T-cell (primary cell): ENCODE measurements at regions of chr3 and their contacts with region 1.

Region 1: DNA sequence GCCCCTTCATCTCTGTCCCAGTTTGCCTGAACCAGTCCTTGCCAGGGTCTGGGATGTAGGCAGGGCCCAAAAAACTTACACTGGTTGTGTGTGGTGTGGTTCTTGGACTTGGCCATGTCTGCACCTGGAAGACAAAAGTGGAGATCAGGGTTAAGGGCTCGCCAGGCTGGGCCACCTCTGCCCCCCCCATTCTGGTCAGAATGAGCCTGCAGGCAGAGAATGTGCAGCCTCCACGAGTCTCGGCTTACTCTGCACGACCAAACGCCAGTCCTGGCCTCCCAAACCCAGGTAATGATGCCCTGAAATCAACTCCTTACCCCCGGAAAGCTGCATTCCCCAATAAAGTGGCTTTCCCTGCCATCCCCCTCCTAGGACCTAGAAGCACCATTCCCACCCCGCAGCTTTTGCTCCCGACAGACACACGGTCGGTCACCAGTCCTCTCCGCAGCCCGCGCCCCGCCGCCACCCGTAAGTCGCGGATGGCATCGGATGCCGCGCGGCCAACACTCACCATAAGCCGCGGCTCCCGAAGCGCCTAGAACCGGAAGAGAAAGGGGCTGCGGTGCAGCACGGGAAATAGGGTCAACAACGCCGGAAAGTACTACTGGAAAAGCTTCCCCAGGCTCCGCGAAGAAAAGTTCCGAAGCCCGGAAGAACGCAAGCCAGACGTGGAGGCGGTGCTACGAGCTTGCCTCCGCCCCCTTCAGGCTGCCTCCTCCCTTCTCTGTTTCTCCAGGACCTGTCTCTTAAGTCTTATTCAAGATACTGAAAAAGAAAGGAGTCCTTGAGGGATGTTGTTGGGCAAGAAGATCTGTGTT is at the start of gene RPL29:
- DNase-seq: peak; percentile 78 to 96 (median 90)
- ATAC-seq: peak; percentile 94 to 98 (median 96)
- H3K4me3 ChIP-seq: peak within 1 kb of the TSS; percentile 68 to 98
- H3K4me3 Mint-ChIP-seq: peak within 1 kb of the TSS; percentile 99 to 100 (median 100)
- H3K27ac ChIP-seq: peak within 1 kb of the TSS; percentile 84
- H3K27ac Mint-ChIP-seq: peak within 1 kb of the TSS; percentile 100
- H3K4me1 ChIP-seq: peaks cover 15 to 35% of the 10 kb centered on the region in 2 experiments
- H3K4me1 Mint-ChIP-seq: peaks cover 31 to 41% (median 37%) of the 10 kb centered on the region in 3 donors
- H3K27me3 ChIP-seq: peaks cover 0 to 4% of the 10 kb centered on the region in 2 experiments
- H3K27me3 Mint-ChIP-seq: no peaks in the 10 kb centered on the region
- total RNA-seq, gene RPL29: 1,518 to 1,711 (median 1,629) TPM

Region 2: DNA sequence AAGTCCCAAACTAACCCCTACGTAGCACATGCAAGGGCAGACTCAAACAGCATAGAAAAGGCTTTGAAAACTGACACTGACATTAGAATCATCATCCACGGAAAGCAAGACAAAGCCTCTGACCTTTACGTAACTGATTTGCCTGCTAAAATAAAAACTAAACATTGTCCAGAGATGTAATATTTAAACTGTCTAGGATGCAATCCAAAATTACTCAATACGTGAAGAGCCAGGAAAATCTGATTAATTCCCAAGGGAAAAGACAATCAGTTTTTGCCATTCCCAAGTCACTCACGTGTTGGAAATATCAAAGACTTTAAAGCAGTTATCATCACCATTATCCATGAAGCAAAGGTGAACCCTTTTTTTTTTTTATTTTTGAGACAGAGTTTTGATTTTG is 79.1 kb before region 1 on chr3:
- CTCF ChIA-PET with region 1: no interaction called
- POLR2A ChIA-PET with region 1: no interaction called
- DNase-seq: no peak
- ATAC-seq: no peak
- H3K4me3 ChIP-seq: no peak overlapping the region
- H3K4me3 Mint-ChIP-seq: no peak overlapping the region
- H3K27ac ChIP-seq: no peak overlapping the region
- H3K27ac Mint-ChIP-seq: no peak overlapping the region
- H3K4me1 ChIP-seq: no peaks in the 10 kb centered on the region
- H3K4me1 Mint-ChIP-seq: no peaks in the 10 kb centered on the region
- H3K27me3 ChIP-seq: peaks cover 0 to 5% of the 10 kb centered on the region in 2 experiments
- H3K27me3 Mint-ChIP-seq: peaks cover 7 to 12% of the 10 kb centered on the region in 2 donors

Region 3: DNA sequence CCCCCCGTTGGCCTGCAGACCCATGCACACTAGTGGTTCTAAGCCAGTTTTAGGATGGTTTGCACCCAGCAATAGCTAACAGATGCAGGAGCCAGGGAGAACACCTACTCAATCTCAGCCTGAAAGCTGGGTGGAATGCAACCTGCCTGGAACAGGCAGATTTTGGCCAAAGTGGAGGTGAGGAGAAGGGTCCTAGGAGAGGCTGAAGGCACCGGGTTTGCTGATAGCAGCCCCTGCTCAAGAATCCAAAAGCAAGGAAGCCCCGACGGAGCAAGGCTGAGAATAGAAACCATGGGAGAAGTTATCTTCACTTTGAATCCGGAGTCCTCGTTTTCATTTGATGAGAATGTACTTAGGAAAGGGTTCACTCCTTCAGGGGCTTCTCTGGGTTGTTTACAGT is 63.8 kb before region 1 on chr3:
- CTCF ChIA-PET with region 1: no interaction called
- POLR2A ChIA-PET with region 1: no interaction called
- DNase-seq: no peak
- ATAC-seq: no peak
- H3K4me3 ChIP-seq: no peak overlapping the region
- H3K4me3 Mint-ChIP-seq: no peak overlapping the region
- H3K27ac ChIP-seq: no peak overlapping the region
- H3K27ac Mint-ChIP-seq: no peak overlapping the region
- H3K4me1 ChIP-seq: no peaks in the 10 kb centered on the region
- H3K4me1 Mint-ChIP-seq: no peaks in the 10 kb centered on the region
- H3K27me3 ChIP-seq: no peaks in the 10 kb centered on the region
- H3K27me3 Mint-ChIP-seq: no peaks in the 10 kb centered on the region

Region 4: GRCh38 chr3:51941798-51942602 is 53.6 kb before region 1 on chr3 and contains the starts of genes PARP3 and RRP9:
- CTCF ChIA-PET with region 1: interaction called, 3 to 10 read pairs
- POLR2A ChIA-PET with region 1: no interaction called
- DNase-seq: peak; percentile 95 to 100 (median 99)
- ATAC-seq: peak; percentile 91 to 95 (median 92)
- H3K4me3 ChIP-seq: peak within 1 kb of the TSS; percentile 75 to 83
- H3K4me3 Mint-ChIP-seq: peak within 1 kb of the TSS; percentile 86 to 92 (median 89)
- H3K27ac ChIP-seq: peak within 1 kb of the TSS; percentile 83
- H3K27ac Mint-ChIP-seq: peak within 1 kb of the TSS; percentile 85 to 87
- H3K4me1 ChIP-seq: peaks cover 6 to 37% of the 10 kb centered on the region in 2 experiments
- H3K4me1 Mint-ChIP-seq: peaks cover 36 to 41% (median 38%) of the 10 kb centered on the region in 3 donors
- H3K27me3 ChIP-seq: no peaks in the 10 kb centered on the region
- H3K27me3 Mint-ChIP-seq: no peaks in the 10 kb centered on the region
- total RNA-seq, gene PARP3: 8.7 to 16.3 (median 12.4) TPM
- total RNA-seq, gene RRP9: 11.4 to 20.5 (median 18.3) TPM

Region 5: DNA sequence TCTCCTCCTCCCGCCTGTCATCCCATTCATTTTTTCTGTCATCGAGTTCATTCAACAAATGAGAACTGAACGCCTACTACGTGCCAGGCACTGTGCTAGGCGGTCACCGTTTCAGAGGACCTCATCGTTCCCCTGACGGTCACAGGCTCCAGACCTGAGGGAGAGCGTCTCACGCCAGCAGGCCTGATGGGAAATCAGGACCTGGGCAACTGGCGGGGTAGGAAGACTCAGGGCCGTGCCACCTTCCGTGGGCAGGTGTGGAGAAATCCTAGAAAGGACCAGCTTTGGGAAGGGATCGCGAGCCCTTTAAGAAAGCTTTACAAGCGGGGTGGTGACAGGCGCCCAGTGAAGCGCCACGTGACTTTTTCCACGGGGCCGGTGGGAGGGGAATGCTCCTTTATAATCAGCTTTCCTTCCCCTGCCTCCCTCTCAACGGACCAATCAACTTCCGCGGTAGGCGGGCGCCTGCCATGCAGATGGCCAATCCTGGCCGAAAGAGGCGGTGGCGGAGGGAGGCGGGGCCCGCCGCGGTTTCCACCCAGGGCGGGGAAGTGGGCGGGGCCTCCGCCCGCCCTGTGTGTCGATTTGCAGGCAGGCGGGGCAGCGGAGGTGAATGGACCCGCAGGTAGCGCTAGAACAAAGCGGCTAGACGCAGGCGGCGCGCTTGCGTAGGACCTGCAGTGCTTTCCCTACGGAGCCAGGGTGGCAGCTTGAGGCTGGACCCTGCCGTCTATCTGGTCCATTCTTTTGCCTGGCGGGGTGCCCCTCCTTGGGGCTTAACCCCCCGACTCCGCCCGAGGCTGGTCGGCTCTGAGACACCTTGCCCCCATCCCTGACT is 61.6 kb after region 1 on chr3:
- CTCF ChIA-PET with region 1: interaction called in 1 of 2 experiments, 13 read pairs
- POLR2A ChIA-PET with region 1: no interaction called
- DNase-seq: peak; percentile 97 to 100 (median 99)
- ATAC-seq: peak; percentile 81 to 85 (median 84)
- H3K4me3 ChIP-seq: peak overlapping the region; percentile 85 to 86
- H3K4me3 Mint-ChIP-seq: peak overlapping the region; percentile 84 to 96 (median 87)
- H3K27ac ChIP-seq: peak overlapping the region; percentile 77
- H3K27ac Mint-ChIP-seq: peak overlapping the region; percentile 89 to 95
- H3K4me1 ChIP-seq: peaks cover 10 to 49% of the 10 kb centered on the region in 2 experiments
- H3K4me1 Mint-ChIP-seq: peaks cover 31 to 34% (median 32%) of the 10 kb centered on the region in 3 donors
- H3K27me3 ChIP-seq: no peaks in the 10 kb centered on the region
- H3K27me3 Mint-ChIP-seq: no peaks in the 10 kb centered on the region